ENCODE measurements at regions of chr7 and their contacts with region 1.

Region 1: GRCh38 chr7:127258111-127258510 is 5.4 kb upstream of the GRM8 start:
- DNase-seq: no peak

Region 2: GRCh38 chr7:127214956-127215718 is 43.0 kb before region 1 on chr7:
- intact Hi-C with region 1: loop called in 1 of 2 experiments (anchors 2 kb)
- DNase-seq: no peak